ENCODE measurements at regions of chr2 and their contacts with region 1.

Region 1: DNA sequence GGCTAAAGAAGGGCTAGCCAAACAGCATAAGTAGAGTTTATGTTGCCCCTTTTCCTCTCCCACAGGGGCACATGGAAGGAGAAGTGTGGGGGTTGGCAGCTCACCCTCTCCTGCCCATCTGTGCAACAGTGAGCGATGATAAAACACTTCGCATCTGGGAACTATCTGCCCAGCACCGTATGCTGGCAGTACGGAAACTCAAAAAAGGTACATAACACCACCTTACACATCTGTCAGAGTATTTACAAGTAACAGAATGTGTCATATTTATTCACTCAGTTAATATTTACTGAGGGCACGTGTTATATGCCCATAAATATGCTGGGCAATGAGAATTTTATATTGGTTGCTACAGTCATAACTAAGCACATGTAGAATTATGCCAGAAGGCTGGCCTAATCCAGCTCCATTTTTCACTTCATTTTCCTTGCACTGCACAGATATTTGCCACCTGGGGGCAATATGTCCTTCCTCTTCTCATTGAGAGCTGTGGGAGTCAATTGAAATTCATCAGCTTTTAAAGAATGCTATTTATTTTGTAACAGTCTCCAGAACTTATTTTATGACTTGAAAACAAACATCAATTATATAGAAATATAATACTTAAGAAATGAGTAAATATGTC is 150.6 kb downstream of the RTN4 start:
- DNase-seq: no peak
- H3K4me3 Mint-ChIP-seq: no peak overlapping the region
- H3K27ac Mint-ChIP-seq: no peak overlapping the region
- H3K4me1 Mint-ChIP-seq: peaks cover 27% of the 10 kb centered on the region
- H3K27me3 Mint-ChIP-seq: no peaks in the 10 kb centered on the region

Region 2: DNA sequence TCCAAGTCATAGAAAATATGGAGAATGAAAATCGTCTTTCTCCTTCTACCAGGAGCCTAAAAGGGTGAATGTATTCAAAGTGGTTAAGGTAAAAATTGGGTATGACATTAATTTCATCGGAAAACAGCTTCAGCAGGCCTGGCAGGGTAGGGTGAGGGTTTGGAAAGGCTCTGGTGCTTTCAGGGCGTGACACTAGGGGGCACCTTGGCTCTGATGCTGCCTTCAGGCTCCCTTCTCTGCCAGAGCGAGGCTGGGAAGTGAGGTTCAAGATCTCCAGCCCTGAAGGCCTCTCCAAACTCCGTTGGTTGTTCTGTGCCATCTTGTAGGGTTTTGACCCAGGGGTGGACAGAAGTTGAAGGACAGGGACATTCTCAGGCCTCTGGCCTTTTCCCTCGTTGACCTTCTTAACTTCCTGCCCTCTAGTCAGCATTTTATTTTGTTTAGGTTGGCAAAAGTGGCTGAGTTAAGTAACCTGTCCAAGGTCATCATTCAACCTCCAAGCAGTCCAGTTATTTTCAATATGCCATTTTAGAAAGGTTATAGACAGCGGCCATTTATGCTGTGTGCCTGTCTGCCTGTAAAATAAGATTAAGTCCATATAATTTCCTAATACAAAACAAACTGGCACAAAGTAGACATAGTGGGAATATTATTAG is 135.9 kb before region 1 on chr2:
- CTCF ChIA-PET with region 1: no interaction called
- intact Hi-C with region 1: loop called (anchors 5 kb)
- DNase-seq: peak; percentile 53
- H3K4me3 Mint-ChIP-seq: no peak overlapping the region
- H3K27ac Mint-ChIP-seq: no peak overlapping the region
- H3K4me1 Mint-ChIP-seq: peaks cover 12% of the 10 kb centered on the region
- H3K27me3 Mint-ChIP-seq: no peaks in the 10 kb centered on the region

Region 3: DNA sequence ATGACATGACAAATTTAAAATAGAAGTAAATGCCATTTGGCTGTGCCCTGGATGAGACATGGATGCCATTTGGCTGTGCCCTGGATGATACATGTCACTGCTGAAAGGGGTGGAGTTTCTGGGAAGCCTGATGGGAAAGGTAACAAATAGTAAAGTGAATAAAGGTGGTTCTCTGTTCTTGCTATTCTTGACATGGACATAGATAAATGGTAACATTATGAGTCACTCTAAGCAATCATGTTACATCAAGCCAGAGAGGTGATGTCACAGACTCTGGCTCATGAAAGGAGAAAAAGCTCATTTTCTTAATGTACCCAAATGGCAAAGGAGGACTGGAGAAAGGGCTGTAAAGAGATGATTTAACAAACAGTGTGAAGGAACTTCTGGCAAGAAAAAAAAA is 89.9 kb before region 1 on chr2:
- CTCF ChIA-PET with region 1: no interaction called
- intact Hi-C with region 1: no loop called
- DNase-seq: no peak
- H3K4me3 Mint-ChIP-seq: no peak overlapping the region
- H3K27ac Mint-ChIP-seq: no peak overlapping the region
- H3K4me1 Mint-ChIP-seq: no peaks in the 10 kb centered on the region
- H3K27me3 Mint-ChIP-seq: peaks cover 13% of the 10 kb centered on the region

Region 4: DNA sequence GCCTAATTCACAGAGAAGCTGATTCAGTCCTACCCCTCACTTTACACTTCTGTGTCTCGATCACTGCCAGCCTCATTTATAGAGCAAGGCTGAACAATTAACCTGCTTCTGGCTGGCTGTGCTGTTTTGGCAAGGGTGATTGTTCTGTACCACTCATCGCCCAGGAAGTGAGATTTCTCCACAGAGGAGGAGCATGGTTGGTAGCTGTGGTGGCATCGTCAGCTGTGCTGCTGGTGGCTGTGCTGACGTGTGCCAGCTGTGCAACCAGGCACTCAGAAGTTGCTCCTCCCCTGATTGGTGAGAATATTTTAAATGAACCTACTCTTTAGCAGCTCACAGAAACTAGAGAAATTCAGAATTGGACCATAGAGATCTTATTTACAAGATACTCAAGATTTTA is 17.9 kb before region 1 on chr2:
- CTCF ChIA-PET with region 1: no interaction called
- intact Hi-C with region 1: no loop called
- DNase-seq: no peak
- H3K4me3 Mint-ChIP-seq: no peak overlapping the region
- H3K27ac Mint-ChIP-seq: no peak overlapping the region
- H3K4me1 Mint-ChIP-seq: no peaks in the 10 kb centered on the region
- H3K27me3 Mint-ChIP-seq: peaks cover 3% of the 10 kb centered on the region

Region 5: DNA sequence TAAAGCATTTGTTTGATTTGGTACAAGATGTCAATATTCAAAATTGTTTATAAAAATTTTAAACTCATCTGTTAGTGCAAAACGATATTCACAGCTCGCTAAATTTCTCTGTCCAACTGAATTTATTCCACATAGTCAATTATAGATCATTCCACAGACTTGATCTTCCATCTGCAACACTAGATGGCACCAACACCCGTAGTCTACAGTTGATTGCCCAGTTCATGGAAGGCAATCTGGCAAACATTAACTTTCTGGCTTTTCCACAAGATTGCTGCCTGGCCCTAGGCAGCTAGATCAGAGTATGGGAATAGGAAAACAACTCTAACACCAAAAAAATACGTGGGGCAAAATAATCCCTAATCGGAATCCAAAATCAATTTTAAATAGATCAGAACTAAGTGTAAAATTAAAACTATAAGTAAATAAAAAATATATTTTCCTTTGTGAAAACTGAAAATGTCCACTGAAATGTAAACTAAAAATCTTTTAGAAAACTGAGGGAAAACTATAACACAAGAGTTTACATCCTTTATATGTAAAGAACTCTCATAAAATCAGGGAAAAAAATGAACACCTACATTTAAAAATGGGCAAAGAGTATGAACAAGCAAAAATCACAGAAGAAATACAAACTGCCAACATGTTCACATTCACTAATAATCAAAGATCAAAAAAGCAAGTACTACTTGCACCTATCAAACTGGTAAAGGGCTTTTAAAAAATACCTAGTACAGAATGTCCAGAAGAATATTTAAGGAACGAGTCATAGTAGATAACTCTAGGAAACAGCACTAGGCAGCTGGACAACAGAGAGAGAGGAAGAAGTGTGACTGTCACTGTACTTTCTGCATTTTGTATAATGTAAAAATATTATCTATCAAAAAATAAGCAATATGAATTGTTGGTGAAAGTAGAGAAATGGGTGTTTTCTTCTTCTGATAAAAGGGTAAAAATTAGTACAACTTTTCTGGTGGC is 115.6 kb after region 1 on chr2:
- CTCF ChIA-PET with region 1: interaction called, 4 read pairs
- intact Hi-C with region 1: loop called (anchors 2 kb)
- DNase-seq: peak; percentile 60
- H3K4me3 Mint-ChIP-seq: no peak overlapping the region
- H3K27ac Mint-ChIP-seq: no peak overlapping the region
- H3K4me1 Mint-ChIP-seq: peaks cover 25% of the 10 kb centered on the region
- H3K27me3 Mint-ChIP-seq: no peaks in the 10 kb centered on the region

Region 6: DNA sequence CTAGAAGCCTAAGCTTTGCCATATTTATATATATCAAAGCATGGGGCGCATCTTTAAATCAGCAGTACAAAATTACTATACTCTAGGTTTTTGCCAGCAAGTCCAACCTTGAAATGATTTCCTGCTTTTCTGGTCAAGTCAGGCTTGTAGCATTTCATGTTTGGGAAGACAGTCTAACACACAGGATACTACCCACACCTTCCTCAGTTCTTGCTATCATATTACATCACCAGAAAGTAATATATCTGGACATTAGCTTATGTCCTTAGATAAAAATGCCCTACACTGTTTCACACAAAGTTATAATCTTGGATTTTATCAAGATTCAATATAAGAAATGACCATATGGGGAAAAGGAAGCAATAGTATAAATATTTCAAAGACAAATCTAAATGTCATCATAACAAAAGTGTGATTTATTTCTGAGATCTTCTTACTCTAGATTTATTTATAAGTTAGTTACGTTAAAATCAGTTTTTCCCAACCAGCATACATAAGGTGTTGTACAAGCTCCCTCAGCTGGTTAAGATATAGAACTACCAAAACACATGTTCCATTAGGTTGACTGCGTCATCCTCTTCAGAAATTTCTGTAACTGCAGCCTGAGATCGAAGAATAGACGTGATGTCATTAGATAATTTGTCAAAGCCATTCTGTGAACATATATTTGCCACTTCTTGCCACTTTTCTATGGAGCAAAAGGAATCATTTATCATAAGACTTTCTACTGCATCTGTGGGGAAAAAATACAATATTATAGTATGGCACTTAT is 275.8 kb after region 1 on chr2:
- CTCF ChIA-PET with region 1: interaction called, 20 read pairs
- intact Hi-C with region 1: loop called (anchors 1 kb)
- DNase-seq: no peak
- H3K4me3 Mint-ChIP-seq: no peak overlapping the region
- H3K27ac Mint-ChIP-seq: no peak overlapping the region
- H3K4me1 Mint-ChIP-seq: peaks cover 7% of the 10 kb centered on the region
- H3K27me3 Mint-ChIP-seq: no peaks in the 10 kb centered on the region

Region 7: DNA sequence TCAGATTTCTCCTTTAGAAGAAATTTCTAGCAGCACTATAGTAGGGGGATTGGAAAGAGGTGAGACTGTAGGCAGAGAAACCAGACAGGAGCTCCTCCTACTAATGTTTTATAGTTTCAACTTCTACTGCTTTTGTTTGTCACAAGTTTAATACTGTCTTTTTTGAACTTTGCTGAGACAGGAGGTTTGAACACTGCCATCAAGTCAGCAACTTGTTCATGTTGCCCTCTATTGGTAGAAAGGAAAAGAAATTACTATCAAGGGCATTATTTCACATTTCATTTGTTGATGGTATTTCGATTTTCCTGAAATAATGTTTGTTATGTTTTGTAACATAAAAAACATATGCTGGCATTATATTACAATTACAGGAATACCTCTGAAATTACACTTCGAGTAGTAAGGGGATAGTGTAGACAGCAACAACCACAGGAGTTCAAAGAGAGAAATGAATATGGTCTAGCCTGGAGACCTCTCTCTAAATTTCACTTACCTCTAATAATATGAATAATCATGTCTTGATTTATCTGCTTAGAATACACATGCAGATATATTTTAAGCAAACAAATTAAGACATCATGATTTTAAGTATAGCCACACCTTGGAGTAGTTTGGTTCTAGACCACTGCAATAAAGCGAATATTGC is 532.4 kb after region 1 on chr2:
- CTCF ChIA-PET with region 1: no interaction called
- intact Hi-C with region 1: loop called (anchors 5 kb)
- DNase-seq: no peak
- H3K4me3 Mint-ChIP-seq: no peak overlapping the region
- H3K27ac Mint-ChIP-seq: no peak overlapping the region
- H3K4me1 Mint-ChIP-seq: peaks cover 3% of the 10 kb centered on the region
- H3K27me3 Mint-ChIP-seq: no peaks in the 10 kb centered on the region

Measured in activated naive CD4-positive, alpha-beta T cell treated with anti-CD3 and anti-CD28 coated beads for 36 hours (primary cell).